ENCODE measurements at regions of chr6 and their contacts with region 1.

Region 1: DNA sequence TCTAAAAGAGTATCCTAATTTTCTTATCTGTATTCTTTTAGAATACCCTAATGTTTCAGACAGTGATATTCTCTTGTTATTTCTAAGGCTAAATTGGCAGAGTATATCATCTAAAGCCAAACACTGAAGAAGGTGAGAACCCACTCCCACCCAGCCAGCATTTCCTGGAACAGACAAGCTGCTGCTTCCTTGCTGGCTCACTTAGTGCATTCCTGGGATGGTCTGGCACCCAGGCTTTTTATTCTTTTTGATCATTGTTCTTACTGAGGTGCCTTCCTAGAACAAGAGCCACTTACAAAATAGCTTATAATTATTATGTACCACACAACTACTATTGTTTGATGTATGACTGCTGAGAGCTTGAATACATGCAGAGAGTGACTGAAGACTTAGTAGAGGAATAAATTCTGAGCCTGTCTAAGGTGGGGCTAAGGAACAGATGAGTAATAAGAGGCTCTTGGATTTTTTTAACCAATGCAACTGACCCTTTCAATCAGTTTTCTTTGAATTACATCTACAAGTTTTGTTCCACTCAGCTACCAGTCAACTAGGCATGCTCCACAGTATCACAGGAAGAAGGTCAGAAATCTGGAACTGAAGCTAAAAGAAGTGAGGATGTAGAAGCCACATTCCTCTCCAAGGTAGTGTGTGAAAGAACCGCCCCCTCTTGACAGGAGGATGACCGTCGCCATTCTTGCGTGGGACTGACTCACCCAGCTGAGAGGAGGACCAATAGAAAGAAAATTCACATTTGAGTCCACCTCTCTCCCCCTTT is 30.1 kb downstream of the PRPH2 start:
- DNase-seq: no peak
- ATAC-seq: no peak
- H3K4me3 ChIP-seq: no peak overlapping the region
- H3K4me3 Mint-ChIP-seq: no peak overlapping the region
- H3K27ac ChIP-seq: no peak overlapping the region
- H3K27ac Mint-ChIP-seq: peak overlapping the region; percentile 39 to 87 (median 77)
- H3K4me1 ChIP-seq: peaks cover 10 to 16% of the 10 kb centered on the region in 2 donors
- H3K4me1 Mint-ChIP-seq: peaks cover 19 to 60% (median 40%) of the 10 kb centered on the region in 7 donors
- H3K27me3 ChIP-seq: no peaks in the 10 kb centered on the region
- H3K27me3 Mint-ChIP-seq: no peaks in the 10 kb centered on the region

Region 2: DNA sequence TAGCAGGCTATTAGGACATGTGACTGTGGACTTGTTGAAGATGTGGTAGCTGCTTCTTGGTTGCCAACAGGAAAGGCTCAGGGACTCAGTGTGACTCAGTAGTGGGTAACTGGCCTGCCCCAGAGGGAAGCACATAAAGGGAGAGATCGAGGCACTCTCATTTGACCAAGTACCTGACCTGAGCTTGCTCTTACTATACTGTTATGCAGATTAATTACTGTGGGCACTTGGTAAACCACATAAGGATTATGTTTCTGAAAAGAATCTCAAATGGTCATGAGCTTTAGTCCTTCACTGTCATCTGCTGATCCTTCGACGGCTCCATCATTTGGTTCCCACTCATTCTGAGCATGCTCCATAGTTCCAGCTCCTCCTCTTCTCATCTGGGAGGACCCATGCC is 138.9 kb after region 1 on chr6:
- CTCF ChIA-PET with region 1: no interaction called
- POLR2A ChIA-PET with region 1: interaction called, 10 read pairs
- intact Hi-C with region 1: no loop called
- DNase-seq: no peak
- ATAC-seq: no peak
- H3K4me3 ChIP-seq: no peak overlapping the region
- H3K4me3 Mint-ChIP-seq: no peak overlapping the region
- H3K27ac ChIP-seq: no peak overlapping the region
- H3K27ac Mint-ChIP-seq: peak overlapping the region in 6 of 9 donors; percentile 11 to 79 (median 58)
- H3K4me1 ChIP-seq: no peaks in the 10 kb centered on the region
- H3K4me1 Mint-ChIP-seq: peaks cover 11 to 27% (median 15%) of the 10 kb centered on the region in 7 donors
- H3K27me3 ChIP-seq: no peaks in the 10 kb centered on the region
- H3K27me3 Mint-ChIP-seq: no peaks in the 10 kb centered on the region

Region 3: DNA sequence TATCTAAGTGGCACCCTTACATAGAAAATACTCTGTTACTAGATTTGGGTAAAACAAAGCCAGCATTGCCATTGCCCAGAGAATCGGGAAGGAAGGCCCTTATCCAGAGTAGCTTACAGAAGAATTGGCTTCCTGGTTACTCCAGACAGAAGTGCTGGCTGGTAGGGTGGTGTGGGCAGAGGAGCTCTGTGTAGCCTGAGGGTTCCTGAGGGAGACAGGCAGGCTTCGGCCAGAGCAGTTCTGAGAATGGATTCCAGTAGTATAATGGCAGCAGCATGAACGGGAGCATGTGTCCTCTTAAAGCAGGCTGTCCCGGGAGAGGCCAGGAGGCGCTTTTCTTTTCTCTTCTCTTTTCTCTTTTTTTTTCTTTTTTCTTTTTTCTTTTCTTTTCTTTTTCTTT is 501.6 kb after region 1 on chr6:
- CTCF ChIA-PET with region 1: no interaction called
- POLR2A ChIA-PET with region 1: no interaction called
- intact Hi-C with region 1: no loop called
- DNase-seq: no peak
- ATAC-seq: no peak
- H3K4me3 ChIP-seq: no peak overlapping the region
- H3K4me3 Mint-ChIP-seq: no peak overlapping the region
- H3K27ac ChIP-seq: no peak overlapping the region
- H3K27ac Mint-ChIP-seq: no peak overlapping the region
- H3K4me1 ChIP-seq: no peaks in the 10 kb centered on the region
- H3K4me1 Mint-ChIP-seq: peaks cover 12 to 19% (median 14%) of the 10 kb centered on the region in 7 donors
- H3K27me3 ChIP-seq: no peaks in the 10 kb centered on the region
- H3K27me3 Mint-ChIP-seq: no peaks in the 10 kb centered on the region

Measured in naive thymus-derived CD4-positive, alpha-beta T cell (primary cell).